A673 (cell line): ENCODE measurements at regions of chr3 and their contacts with region 1.

Region 1: GRCh38 chr3:15601397-15602145 is at the starts of genes BTD and HACL1:
- DNase-seq: peak; percentile 100
- H3K4me3 ChIP-seq: peak within 1 kb of the TSS; percentile 65
- H3K27ac ChIP-seq: peak within 1 kb of the TSS; percentile 86
- H3K4me1 ChIP-seq: peaks cover 5% of the 10 kb centered on the region
- H3K27me3 ChIP-seq: no peaks in the 10 kb centered on the region
- CTCF ChIP-seq: peak; percentile 40
- total RNA-seq, gene BTD: 5.6 and 7.6 TPM in 2 replicates
- total RNA-seq, gene HACL1: 18.6 and 22.0 TPM in 2 replicates

Region 2: DNA sequence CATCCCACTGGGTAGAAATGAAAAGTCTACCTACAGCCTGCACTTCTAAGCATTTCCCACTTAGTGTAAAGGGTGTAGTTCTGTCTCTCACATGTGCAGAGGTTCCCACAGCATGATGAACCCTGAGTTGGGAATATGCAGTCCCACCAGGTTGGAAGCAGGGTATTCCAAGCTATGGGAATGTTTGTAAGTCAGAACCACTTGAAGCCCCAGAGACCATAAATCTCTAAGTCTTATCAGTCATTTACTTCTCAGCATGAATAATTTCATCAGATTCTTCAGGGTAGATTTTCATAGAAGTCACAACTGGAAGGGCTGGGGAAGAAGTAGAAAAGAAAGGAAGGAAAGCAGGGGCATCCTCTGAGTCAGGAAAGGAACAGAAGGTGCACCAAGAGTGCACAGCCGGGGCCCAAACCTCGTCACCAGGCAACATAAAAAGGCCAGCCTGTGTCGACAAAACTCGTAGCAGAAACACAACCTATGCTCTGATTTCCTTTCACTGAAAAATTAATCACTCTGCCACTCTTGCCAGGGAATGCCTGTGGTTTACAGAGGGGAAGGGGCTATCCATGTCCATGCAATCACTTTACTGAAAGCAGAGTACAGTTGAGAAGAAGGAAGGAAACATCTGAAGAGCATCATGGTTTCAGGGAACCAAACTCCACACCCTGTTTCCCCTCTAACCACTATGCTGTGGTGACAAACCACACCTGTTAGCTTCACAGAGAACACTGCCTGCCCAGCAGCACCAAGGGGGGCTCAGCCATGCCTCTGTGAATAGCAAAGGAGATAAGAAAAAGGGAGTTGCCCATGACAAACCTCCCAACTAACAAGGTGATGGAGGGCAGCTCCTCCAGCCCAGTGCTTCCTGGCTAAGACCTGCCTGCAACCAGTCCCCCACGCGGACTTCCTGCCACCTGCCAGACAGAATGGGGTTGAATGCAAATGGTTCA is 309.7 kb before region 1 on chr3:
- CTCF ChIA-PET with region 1: no interaction called
- POLR2A ChIA-PET with region 1: no interaction called
- intact Hi-C with region 1: no loop called
- DNase-seq: no peak
- H3K4me3 ChIP-seq: no peak overlapping the region
- H3K27ac ChIP-seq: no peak overlapping the region
- H3K4me1 ChIP-seq: peaks cover 17% of the 10 kb centered on the region
- H3K27me3 ChIP-seq: no peaks in the 10 kb centered on the region
- CTCF ChIP-seq: no peak

Region 3: GRCh38 chr3:15440891-15441290 is 160.7 kb before region 1 on chr3:
- CTCF ChIA-PET with region 1: no interaction called
- POLR2A ChIA-PET with region 1: interaction called, 15 read pairs
- intact Hi-C with region 1: no loop called
- DNase-seq: no peak
- H3K4me3 ChIP-seq: no peak overlapping the region
- H3K27ac ChIP-seq: no peak overlapping the region
- H3K4me1 ChIP-seq: no peaks in the 10 kb centered on the region
- H3K27me3 ChIP-seq: no peaks in the 10 kb centered on the region
- CTCF ChIP-seq: no peak